ENCODE measurements at regions of chr2 and their contacts with region 1.

Region 1: DNA sequence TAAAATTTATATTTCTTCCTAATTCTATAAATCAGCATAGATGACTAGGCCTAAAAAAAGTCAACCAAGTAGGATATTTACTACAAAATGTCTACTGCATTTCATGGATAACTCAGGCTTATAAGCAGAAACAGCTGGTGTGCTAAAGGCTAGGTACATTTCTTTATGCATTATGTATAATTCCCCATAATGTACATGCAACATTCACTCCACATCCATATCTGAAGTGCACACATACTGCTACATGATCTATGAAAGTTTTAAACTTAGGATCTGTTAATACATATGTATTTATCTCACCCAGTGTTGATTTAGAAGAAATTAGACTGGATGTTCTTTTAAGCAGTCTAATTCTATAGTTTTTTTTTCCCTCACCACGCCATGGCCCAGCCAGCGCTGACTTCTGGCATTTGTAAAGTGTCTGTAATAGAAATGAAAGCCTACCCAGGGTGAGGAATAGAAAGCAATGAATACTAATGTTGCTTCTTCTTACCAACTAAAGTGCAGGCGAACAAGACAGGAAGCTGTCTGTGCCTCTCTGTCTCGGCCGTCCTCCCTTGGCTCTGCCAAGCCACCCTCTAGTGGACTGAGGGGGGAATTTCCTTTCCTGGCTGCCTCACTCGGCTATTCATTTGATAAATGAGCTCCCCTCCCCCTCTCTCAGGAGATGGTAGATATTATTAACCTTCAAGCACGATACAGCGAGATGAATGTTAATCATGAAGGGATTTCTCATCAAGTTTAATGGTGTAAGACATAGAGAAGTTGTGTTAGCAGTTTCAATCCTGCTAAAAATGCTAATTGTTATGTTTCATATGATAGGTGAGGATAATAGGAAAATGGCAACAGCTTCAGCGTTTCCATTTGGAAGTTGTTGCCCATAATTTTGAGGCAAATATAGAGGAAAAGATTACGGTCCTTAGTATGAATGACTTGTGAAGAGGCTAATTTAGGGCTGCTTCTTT is 384.5 kb downstream of the MTX2 start:
- DNase-seq: peak; percentile 50
- H3K4me3 Mint-ChIP-seq: no peak overlapping the region
- H3K27ac Mint-ChIP-seq: no peak overlapping the region
- H3K4me1 Mint-ChIP-seq: peaks cover 2% of the 10 kb centered on the region
- H3K27me3 Mint-ChIP-seq: peaks cover 35% of the 10 kb centered on the region

Region 2: DNA sequence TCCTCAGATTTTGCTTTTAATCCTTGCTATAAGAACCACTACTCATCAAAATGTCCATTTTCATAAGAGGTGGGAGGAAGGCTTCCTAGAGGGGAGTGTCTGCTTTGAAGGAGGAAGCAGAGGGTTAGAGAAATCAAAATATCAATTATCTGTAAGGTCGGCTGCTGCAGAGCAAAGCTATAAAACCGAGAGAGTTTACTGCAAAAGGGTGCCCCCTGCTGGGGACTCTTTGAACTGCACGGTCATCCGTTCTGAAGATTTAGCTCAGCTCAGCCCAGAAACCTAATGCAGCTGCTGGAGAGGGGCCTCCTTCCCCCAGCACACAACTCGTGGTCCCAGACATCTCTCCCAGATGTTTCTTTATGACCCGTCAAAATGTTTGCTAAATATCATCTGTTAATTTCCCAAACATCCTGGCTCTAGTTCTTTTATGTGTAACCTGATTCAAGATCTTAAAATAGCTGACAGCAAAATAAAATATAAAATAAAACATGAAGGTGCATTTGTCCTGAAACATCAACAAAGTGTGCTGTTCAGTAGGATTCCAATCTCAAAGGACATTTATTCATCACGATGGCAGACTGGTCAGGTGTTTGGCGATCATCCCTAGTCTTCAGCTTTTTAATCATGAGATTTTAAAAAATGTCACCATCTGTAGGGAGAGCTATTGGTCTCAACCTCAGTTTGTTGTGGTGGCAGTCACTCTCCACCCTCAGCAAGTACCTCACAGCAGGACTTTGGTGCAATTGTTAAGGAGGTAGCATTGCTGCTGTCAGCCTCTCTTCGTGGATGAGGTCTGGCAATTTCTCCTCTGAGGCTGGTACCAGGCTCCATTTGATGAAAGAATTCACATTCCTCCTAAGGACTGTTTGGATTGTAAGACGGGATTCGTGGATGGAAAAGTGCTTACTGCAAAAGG is 198.6 kb before region 1 on chr2:
- CTCF ChIA-PET with region 1: interaction called, 5 read pairs
- POLR2A ChIA-PET with region 1: no interaction called
- intact Hi-C with region 1: loop called (anchors 2 kb)
- DNase-seq: peak; percentile 86
- H3K4me3 Mint-ChIP-seq: no peak overlapping the region
- H3K27ac Mint-ChIP-seq: no peak overlapping the region
- H3K4me1 Mint-ChIP-seq: no peaks in the 10 kb centered on the region
- H3K27me3 Mint-ChIP-seq: peaks cover 19% of the 10 kb centered on the region

Region 3: DNA sequence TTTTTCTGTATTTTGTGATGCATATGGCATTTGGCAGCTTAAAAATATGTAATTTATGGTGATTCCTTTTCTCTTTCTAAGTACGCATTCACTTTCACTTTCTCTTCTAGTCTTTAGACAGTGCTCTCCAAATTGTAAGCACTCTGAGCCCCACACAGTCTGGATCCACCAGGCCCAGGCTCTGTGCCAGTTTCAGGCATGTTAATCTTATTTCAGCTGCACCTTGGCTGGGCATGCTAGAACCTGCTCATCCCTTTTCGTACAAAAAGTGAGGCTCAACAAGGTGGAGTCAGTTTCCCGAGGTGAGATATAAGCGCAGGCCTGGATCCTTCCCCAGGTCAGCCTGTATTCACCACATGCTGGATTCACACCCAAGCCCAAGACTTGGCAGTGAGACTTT is 180.6 kb before region 1 on chr2:
- CTCF ChIA-PET with region 1: no interaction called
- POLR2A ChIA-PET with region 1: no interaction called
- intact Hi-C with region 1: no loop called
- DNase-seq: peak; percentile 12
- H3K4me3 Mint-ChIP-seq: no peak overlapping the region
- H3K27ac Mint-ChIP-seq: no peak overlapping the region
- H3K4me1 Mint-ChIP-seq: peaks cover 14% of the 10 kb centered on the region
- H3K27me3 Mint-ChIP-seq: peaks cover 10% of the 10 kb centered on the region

Region 4: DNA sequence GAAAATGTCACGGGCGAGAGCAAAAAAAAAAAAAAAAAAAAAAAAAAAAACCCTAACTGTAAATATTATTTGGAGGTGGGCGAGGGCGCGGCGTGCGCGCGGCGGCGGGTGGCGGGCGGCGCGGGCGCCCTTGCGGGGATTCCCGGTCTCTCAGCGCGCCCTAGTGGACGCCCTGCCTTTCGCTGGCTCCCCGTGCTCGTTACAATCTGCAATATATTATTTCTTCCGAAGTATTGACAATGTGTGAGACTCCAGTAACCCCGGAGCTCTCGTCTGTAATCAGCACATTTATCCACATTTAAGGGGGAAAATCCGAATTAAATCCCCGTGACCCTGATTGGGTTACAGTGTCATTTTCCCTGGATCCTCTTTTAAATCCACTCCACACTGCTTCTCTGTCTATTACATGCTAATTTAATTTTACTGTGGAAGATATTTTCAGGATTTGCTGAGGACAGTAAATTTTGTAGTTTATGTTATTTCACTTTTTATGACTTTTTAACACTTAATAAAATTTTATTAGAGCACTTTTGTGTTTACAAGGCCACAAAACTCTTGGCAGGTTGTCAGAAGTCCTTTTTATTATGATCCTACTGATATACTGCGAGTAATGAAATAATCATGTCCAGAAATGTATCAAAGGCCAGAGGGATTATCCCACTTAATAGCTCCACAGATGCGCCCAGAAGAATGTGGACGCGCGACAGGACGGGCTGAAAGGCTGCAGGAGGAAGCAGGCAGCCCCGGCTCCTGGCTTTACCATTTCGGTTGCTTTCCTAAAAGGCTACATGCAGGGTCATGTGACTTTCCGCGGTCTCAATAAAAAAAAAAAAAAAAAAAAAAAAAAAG is 15.4 kb before region 1 on chr2:
- CTCF ChIA-PET with region 1: interaction called, 28 read pairs
- POLR2A ChIA-PET with region 1: no interaction called
- intact Hi-C with region 1: no loop called
- DNase-seq: peak; percentile 65
- H3K4me3 Mint-ChIP-seq: peak overlapping the region; percentile 58
- H3K27ac Mint-ChIP-seq: no peak overlapping the region
- H3K4me1 Mint-ChIP-seq: peaks cover 2% of the 10 kb centered on the region
- H3K27me3 Mint-ChIP-seq: peaks cover 45% of the 10 kb centered on the region

Region 5: GRCh38 chr2:176669398-176670174 is 15.8 kb after region 1 on chr2:
- CTCF ChIA-PET with region 1: interaction called, 16 read pairs
- POLR2A ChIA-PET with region 1: no interaction called
- intact Hi-C with region 1: no loop called
- DNase-seq: no peak
- H3K4me3 Mint-ChIP-seq: no peak overlapping the region
- H3K27ac Mint-ChIP-seq: no peak overlapping the region
- H3K4me1 Mint-ChIP-seq: no peaks in the 10 kb centered on the region
- H3K27me3 Mint-ChIP-seq: peaks cover 13% of the 10 kb centered on the region

Region 6: DNA sequence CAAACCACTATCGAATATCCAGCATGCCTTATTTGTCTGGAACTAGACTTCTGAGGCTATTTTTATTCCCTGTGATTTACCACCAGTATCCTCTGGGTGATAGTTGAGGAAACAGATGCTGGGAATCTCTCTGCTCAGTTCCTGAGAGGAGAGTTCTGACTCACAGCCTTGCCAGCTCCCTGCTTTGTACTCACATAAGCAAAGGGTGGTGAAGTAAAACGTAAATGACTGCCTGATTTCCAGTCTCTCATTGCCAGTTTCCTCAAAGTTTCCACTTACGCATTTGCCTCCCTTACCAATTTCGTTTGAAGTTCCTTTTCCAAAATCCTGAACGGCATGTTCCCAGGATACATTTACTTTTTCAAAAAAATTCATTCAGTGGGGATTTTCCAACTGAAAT is 489.7 kb after region 1 on chr2:
- CTCF ChIA-PET with region 1: interaction called, 40 read pairs
- POLR2A ChIA-PET with region 1: no interaction called
- intact Hi-C with region 1: loop called (anchors 2 kb)
- DNase-seq: no peak
- H3K4me3 Mint-ChIP-seq: no peak overlapping the region
- H3K27ac Mint-ChIP-seq: no peak overlapping the region
- H3K4me1 Mint-ChIP-seq: peaks cover 7% of the 10 kb centered on the region
- H3K27me3 Mint-ChIP-seq: peaks cover 26% of the 10 kb centered on the region

Region 7: GRCh38 chr2:177983183-177983788 is 1329.5 kb after region 1 on chr2:
- CTCF ChIA-PET with region 1: no interaction called
- POLR2A ChIA-PET with region 1: no interaction called
- intact Hi-C with region 1: no loop called
- DNase-seq: peak; percentile 34
- H3K4me3 Mint-ChIP-seq: no peak overlapping the region
- H3K27ac Mint-ChIP-seq: no peak overlapping the region
- H3K4me1 Mint-ChIP-seq: no peaks in the 10 kb centered on the region
- H3K27me3 Mint-ChIP-seq: peaks cover 3% of the 10 kb centered on the region

Measured in activated CD4-positive, alpha-beta memory T cell treated with anti-CD3 and anti-CD28 coated beads for 36 hours (primary cell).